Transverse colon (tissue), 4 donors: ENCODE measurements at regions of chr12 and their contacts with region 1.

Region 1: GRCh38 chr12:51970904-51971646 is 19.6 kb downstream of the ACVR1B start:
- DNase-seq: peak; percentile 24
- H3K4me3 ChIP-seq: no peak overlapping the region
- H3K27ac ChIP-seq: peak overlapping the region in 2 of 4 donors; percentile 18 to 45
- H3K4me1 ChIP-seq: peaks cover 11 to 57% (median 42%) of the 10 kb centered on the region in 4 donors
- H3K27me3 ChIP-seq: no peaks in the 10 kb centered on the region
- CTCF ChIP-seq: peak; percentile 41 to 58 (median 48)
- EP300 ChIP-seq: no peak
- POLR2A ChIP-seq: no peak

Region 2: DNA sequence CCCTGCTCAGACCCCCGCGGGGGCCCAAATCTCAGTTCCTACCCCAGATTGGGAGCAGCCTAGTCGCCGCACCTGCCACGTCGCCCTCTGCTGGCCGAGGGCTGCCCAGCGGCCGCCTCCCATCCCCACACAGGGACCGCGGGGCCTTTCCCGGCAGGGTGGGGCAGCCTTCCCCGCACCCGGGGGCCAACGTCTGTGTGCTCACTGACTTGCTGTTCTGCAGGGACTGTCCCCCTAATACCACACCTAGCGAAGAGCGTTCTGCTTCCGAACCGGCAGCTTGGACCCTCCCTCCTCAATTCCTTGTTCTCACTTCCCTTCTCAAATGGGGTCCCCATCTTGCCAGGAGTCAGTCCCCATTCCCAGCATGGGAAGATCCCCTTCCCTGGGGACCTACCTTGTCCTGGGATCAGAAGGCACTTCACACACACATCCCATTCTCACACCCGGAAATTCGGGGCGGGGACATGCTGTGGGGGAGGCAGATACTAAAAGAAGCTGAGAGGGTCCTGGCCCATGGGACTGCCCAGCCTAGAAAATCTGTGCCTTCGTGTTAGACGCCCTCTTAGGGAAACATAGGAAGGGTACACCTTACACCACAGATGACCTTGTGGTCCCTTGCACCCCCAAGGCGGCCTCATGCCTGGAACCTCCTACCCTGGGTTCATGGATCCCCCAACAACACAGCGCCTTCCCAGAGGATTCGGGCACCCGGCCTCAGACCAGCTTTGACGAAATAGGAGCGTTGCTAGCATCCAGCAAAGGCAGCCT is 47.4 kb before region 1 on chr12:
- in situ Hi-C with region 1: loop called in 2 of 4 experiments (anchors 5 to 10 kb)
- intact Hi-C with region 1: no loop called
- DNase-seq: peak; percentile 72
- H3K4me3 ChIP-seq: no peak overlapping the region
- H3K27ac ChIP-seq: peak overlapping the region; percentile 73 to 80 (median 74)
- H3K4me1 ChIP-seq: peaks cover 4 to 22% (median 14%) of the 10 kb centered on the region in 4 donors
- H3K27me3 ChIP-seq: no peaks in the 10 kb centered on the region
- CTCF ChIP-seq: peak; percentile 78 to 90 (median 86)
- EP300 ChIP-seq: no peak
- POLR2A ChIP-seq: peak; percentile 10